ENCODE measurements at regions of chr20 and their contacts with region 1.

Region 1: GRCh38 chr20:43590392-43591323 is at the start of gene IFT52:
- DNase-seq: peak; percentile 97
- H3K4me3 Mint-ChIP-seq: peak within 1 kb of the TSS; percentile 99
- H3K27ac Mint-ChIP-seq: peak within 1 kb of the TSS; percentile 81
- H3K4me1 Mint-ChIP-seq: peaks cover 21% of the 10 kb centered on the region
- H3K27me3 Mint-ChIP-seq: no peaks in the 10 kb centered on the region
- CTCF ChIP-seq: no peak
- total RNA-seq, gene IFT52: 30.2 and 30.8 TPM in 2 replicates

Region 2: DNA sequence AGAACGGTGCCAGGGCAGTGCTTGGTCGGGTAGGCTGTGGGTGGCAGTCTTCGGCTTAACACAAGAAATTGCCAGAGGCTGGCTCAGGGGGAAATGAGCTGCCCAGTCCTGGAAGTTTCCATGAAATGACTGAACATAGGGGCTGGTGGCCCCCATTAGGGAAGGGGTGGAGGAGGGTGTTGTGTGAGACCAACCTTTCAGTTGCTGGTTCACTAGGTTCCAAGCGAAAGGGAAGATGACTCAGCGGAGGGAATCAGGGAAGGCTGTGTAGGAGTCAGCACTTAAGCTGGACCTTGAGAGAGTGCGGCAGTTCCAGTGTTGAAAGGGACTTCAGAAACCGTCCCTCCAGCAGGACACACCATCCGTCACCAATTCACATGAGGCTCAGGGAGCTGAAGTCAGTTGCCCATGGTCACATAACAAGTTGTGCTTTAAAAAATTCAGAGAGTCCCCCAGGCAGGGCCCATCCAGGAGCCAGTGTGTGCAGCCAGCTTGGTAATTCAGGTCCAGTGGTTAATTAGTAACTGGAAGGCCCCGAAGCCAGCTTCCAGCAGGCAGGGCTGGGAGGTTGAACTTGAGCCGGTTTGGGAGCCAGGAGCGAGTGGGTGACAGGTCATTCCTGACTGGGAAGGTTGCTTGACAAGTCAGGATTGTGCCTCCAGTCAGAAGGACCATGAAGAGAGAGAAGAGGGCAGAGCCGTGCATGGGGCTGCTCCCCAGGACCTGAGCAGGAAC is 32.1 kb before region 1 on chr20 and contains the start of gene SGK2:
- CTCF ChIA-PET with region 1: interaction called, 10 read pairs
- intact Hi-C with region 1: loop called (anchors 2 kb)
- DNase-seq: peak; percentile 90
- H3K4me3 Mint-ChIP-seq: peak within 1 kb of the TSS; percentile 73
- H3K27ac Mint-ChIP-seq: peak within 1 kb of the TSS; percentile 70
- H3K4me1 Mint-ChIP-seq: peaks cover 55% of the 10 kb centered on the region
- H3K27me3 Mint-ChIP-seq: no peaks in the 10 kb centered on the region
- CTCF ChIP-seq: no peak
- total RNA-seq, gene SGK2: 45.6 and 46.5 TPM in 2 replicates

Region 3: GRCh38 chr20:43681468-43681942 is 90.8 kb after region 1 on chr20:
- CTCF ChIA-PET with region 1: no interaction called
- intact Hi-C with region 1: no loop called
- DNase-seq: no peak
- H3K4me3 Mint-ChIP-seq: no peak overlapping the region
- H3K27ac Mint-ChIP-seq: no peak overlapping the region
- H3K4me1 Mint-ChIP-seq: no peaks in the 10 kb centered on the region
- H3K27me3 Mint-ChIP-seq: no peaks in the 10 kb centered on the region
- CTCF ChIP-seq: no peak

Region 4: DNA sequence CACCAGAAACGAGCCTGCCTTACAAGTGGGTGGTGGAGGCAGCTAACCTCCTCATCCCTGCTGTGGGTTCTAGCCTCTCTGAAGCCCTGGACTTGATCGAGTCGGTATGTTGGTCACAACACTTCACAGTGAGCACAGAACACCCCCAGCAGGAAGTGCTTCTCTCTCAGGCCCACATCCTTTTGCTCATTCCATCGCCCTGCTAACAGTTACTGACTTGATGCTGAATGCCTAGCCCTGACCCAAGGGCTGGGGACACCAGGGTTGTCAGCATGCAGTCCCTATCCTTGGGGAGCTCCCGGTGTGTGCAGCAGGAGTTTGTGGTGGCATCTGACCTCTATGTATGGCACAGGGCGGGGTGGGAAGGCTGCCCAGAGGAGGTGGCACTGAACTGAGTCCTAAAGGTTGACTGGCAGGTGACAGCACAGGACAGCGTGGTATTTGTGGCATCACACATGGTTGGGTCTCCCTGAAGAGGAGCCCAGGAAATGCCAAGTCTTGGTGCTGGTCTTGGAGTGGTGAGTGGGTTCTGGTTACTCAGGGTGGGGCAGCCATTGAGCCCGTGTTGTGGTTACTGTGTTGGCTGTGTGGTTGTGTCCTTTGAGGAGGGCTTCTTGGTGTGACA is 109.4 kb after region 1 on chr20:
- CTCF ChIA-PET with region 1: interaction called, 10 read pairs
- intact Hi-C with region 1: no loop called
- DNase-seq: no peak
- H3K4me3 Mint-ChIP-seq: no peak overlapping the region
- H3K27ac Mint-ChIP-seq: no peak overlapping the region
- H3K4me1 Mint-ChIP-seq: no peaks in the 10 kb centered on the region
- H3K27me3 Mint-ChIP-seq: no peaks in the 10 kb centered on the region
- CTCF ChIP-seq: no peak